Endothelial cell of umbilical vein (primary cell): ENCODE measurements at regions of chr9 and their contacts with region 1.

Region 1: DNA sequence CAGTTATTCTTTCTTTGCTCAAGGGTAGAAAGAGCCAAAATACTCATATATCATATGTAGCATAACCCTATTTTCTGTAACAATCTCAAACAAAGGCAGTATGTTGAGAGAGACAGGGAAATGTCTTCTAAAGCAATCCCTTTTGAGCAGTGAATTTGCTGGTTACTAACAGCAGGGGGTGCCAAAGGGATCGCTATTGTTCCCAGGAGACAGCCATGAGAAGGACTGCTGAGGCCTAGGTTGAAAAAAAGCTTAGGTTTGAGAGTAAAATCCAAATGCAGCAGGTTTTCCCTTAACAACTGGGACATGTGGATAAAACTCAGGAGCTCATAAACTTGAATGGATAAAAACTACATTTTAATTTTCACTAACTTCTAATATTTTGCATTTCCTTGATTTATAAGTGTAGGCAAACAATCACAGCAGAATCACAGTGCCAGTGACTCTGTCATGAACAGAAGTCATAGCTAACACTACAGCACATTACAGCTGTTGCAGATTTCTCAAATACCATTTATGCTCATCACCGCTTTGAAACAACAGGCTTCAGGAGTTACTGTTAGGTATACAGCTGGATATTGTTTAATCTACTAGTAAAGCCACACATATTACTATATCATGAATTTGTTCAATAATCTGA is 148.4 kb downstream of the MAPKAP1 start:
- DNase-seq: peak; percentile 78
- H3K4me3 ChIP-seq: no peak overlapping the region
- H3K27ac ChIP-seq: no peak overlapping the region
- H3K4me1 ChIP-seq: peaks cover 5% of the 10 kb centered on the region
- H3K27me3 ChIP-seq: no peaks in the 10 kb centered on the region
- CTCF ChIP-seq: peak; percentile 78 to 81
- POLR2A ChIP-seq: no peak

Region 2: GRCh38 chr9:125200210-125201047 is 358.1 kb before region 1 on chr9 and contains the start of gene RABEPK:
- CTCF ChIA-PET with region 1: no interaction called
- POLR2A ChIA-PET with region 1: no interaction called
- dilution Hi-C with region 1: no loop called
- intact Hi-C with region 1: no loop called
- DNase-seq: peak; percentile 94
- H3K4me3 ChIP-seq: peak within 1 kb of the TSS; percentile 78 to 91 (median 80)
- H3K27ac ChIP-seq: peak within 1 kb of the TSS; percentile 81
- H3K4me1 ChIP-seq: peaks cover 6% of the 10 kb centered on the region
- H3K27me3 ChIP-seq: peaks cover 2 to 3% of the 10 kb centered on the region in 2 experiments
- CTCF ChIP-seq: no peak
- POLR2A ChIP-seq: peak; percentile 93
- total RNA-seq, gene RABEPK: 18.2 and 19.1 TPM in 2 replicates

Region 3: GRCh38 chr9:125407974-125408900 is 150.3 kb before region 1 on chr9:
- CTCF ChIA-PET with region 1: interaction called, 20 read pairs
- POLR2A ChIA-PET with region 1: no interaction called
- dilution Hi-C with region 1: no loop called
- intact Hi-C with region 1: loop called (anchors 2 kb)
- DNase-seq: peak; percentile 61
- H3K4me3 ChIP-seq: peak overlapping the region; percentile 39 to 62 (median 40)
- H3K27ac ChIP-seq: peak overlapping the region; percentile 66
- H3K4me1 ChIP-seq: peaks cover 3% of the 10 kb centered on the region
- H3K27me3 ChIP-seq: no peaks in the 10 kb centered on the region
- CTCF ChIP-seq: peak; percentile 82 to 93
- POLR2A ChIP-seq: no peak

Region 4: GRCh38 chr9:125460346-125460745 is 98.2 kb before region 1 on chr9:
- CTCF ChIA-PET with region 1: no interaction called
- POLR2A ChIA-PET with region 1: no interaction called
- dilution Hi-C with region 1: no loop called
- intact Hi-C with region 1: no loop called
- DNase-seq: no peak
- H3K4me3 ChIP-seq: no peak overlapping the region
- H3K27ac ChIP-seq: no peak overlapping the region
- H3K4me1 ChIP-seq: no peaks in the 10 kb centered on the region
- H3K27me3 ChIP-seq: no peaks in the 10 kb centered on the region
- CTCF ChIP-seq: no peak
- POLR2A ChIP-seq: no peak

Region 5: DNA sequence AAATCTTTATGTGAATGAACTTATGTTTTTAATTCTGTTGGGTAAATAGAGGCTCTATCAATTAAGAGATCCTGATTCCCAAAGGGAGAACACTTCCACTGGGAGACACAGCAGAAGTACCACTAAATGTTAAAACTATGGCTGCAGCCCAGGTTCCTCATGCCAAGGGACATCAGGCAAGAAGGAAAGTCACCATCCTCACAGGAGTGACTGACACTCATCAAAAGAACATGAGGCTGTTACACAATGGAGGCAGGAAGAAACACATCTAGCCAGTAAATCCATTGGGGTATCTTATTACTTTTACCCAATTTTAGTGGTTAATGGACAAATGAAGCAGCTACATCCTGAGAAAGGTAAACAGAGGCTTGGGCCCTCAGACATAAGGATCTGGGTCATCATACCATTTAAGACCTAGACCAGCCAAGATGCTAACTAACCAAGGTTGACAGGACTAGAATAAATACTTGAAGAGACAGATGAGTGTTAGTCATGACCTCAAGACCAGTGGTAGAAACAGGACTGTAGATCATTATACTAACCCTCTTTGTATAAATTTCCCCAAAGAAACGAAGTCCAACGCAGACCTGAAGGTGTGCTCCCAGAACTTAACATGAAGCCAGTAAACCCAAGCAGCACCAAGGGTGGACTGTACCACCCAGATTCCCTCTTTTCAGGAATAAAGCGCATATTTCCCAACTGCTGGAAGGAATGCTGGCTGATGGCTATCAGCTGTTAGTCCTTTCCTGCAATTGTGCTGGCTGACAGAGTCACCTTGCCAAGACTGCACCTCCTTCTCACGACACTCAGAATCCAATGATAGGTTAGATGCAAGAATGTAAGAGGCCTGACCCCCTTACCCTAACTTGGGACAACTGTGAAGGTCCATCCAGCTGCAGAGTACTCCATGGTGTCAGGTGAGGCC is 54.3 kb after region 1 on chr9:
- CTCF ChIA-PET with region 1: interaction called, 4 read pairs
- POLR2A ChIA-PET with region 1: no interaction called
- dilution Hi-C with region 1: no loop called
- intact Hi-C with region 1: loop called (anchors 10 kb)
- DNase-seq: peak; percentile 85
- H3K4me3 ChIP-seq: no peak overlapping the region
- H3K27ac ChIP-seq: peak overlapping the region; percentile 72
- H3K4me1 ChIP-seq: peaks cover 25% of the 10 kb centered on the region
- H3K27me3 ChIP-seq: no peaks in the 10 kb centered on the region
- CTCF ChIP-seq: no peak
- POLR2A ChIP-seq: no peak

Region 6: GRCh38 chr9:125649315-125649714 is 90.7 kb after region 1 on chr9:
- CTCF ChIA-PET with region 1: interaction called, 15 read pairs
- POLR2A ChIA-PET with region 1: no interaction called
- dilution Hi-C with region 1: no loop called
- intact Hi-C with region 1: no loop called
- DNase-seq: peak; percentile 92
- H3K4me3 ChIP-seq: no peak overlapping the region
- H3K27ac ChIP-seq: peak overlapping the region; percentile 99
- H3K4me1 ChIP-seq: peaks cover 52% of the 10 kb centered on the region
- H3K27me3 ChIP-seq: no peaks in the 10 kb centered on the region
- CTCF ChIP-seq: no peak
- POLR2A ChIP-seq: peak; percentile 41

Region 7: GRCh38 chr9:126228781-126229444 is 670.3 kb after region 1 on chr9:
- CTCF ChIA-PET with region 1: interaction called, 5 read pairs
- POLR2A ChIA-PET with region 1: no interaction called
- dilution Hi-C with region 1: no loop called
- intact Hi-C with region 1: loop called (anchors 1 kb)
- DNase-seq: peak; percentile 60
- H3K4me3 ChIP-seq: no peak overlapping the region
- H3K27ac ChIP-seq: no peak overlapping the region
- H3K4me1 ChIP-seq: no peaks in the 10 kb centered on the region
- H3K27me3 ChIP-seq: peaks cover 2 to 5% of the 10 kb centered on the region in 2 experiments
- CTCF ChIP-seq: peak; percentile 83 to 95
- POLR2A ChIP-seq: no peak